ENCODE measurements at regions of chr1 and their contacts with region 1.

Region 1: DNA sequence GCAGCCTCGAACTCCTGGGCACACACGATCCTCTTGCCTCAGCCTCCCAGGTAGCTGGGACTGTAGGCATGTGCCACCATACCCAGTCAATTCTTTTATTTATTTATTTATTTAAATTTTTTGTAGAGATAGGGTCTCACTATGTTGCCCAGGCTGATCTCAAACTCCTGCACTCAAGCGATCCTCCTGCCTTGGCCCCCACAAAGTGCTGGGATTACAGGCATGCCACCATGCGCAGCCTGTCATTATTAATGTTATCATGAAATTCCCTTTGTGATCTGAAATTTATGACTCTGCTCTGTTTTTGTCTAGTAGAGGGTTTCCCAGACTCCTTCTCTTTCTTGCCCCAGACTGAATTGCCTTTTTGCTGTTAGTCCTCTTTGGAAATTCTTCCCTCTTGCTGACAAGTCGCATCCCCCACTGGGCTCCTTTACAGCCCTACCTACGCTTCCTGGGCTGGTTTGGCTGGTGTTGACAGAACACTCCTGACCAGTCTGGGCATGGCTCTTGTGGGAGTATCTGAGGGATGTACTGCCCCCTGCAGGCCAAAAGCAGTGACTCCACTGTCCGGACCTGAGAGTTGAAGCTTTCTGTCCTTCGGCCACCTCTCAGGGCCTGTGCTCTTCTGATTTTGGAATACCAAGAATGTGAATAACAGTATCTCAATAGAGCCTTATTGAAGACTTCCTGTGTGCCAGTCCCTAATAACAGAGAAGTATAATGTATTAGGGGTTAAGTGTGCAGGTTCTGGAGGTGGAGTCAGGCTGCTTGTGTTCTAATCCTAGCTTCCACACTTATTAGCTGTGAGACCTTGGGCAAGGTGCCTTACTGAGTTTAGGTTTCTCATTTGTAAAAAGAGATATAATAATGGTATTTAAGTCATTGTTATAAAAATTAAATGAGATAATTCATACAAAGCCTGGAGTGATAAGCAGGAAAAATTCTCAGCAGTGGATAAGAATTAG is 28.2 kb downstream of the TCEANC2 start:
- DNase-seq: peak; percentile 57
- H3K4me3 ChIP-seq: no peak overlapping the region; a peak in 1 of 4 replicates
- H3K27ac ChIP-seq: no peak overlapping the region
- H3K4me1 ChIP-seq: no peaks in the 10 kb centered on the region
- H3K27me3 ChIP-seq: no peaks in the 10 kb centered on the region
- CTCF ChIP-seq: peak; percentile 80
- EP300 ChIP-seq: no peak
- RAD21 ChIP-seq: peak; percentile 56

Region 2: DNA sequence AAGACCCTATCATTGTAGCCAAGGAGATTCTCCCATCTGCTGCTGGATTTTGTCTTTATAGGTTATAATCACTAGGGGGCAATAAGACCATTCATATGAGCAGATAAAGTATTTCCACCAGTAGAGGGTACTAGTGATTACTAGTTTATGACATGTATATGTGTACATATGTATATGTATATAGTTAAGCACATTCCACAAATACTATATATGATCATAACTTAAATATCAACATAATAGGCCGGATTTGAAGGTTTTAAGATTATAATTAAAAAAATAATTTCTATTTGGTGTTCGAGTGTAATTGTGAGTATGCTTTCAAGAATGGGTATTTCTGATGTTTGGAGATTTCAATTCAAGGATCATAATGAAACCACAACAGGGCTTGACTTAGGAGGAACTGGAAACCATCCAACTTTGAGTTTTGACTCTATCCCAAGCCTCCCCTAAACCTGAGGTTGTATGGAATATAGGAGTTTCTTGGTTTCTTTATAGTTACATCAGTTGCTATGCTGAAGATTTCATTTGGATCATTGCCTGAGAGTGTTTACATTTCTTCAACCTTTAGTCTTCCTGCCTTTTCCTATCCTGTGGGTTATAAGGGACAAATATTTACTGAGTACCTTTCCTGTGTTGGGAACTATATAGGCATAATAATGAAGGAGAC is 11.3 kb before region 1 on chr1:
- CTCF ChIA-PET with region 1: interaction called, 17 read pairs
- POLR2A ChIA-PET with region 1: no interaction called
- DNase-seq: peak; percentile 68
- H3K4me3 ChIP-seq: peak overlapping the region in 1 of 2 experiments; percentile 30; a peak in 1 of 4 replicates
- H3K27ac ChIP-seq: no peak overlapping the region
- H3K4me1 ChIP-seq: no peaks in the 10 kb centered on the region
- H3K27me3 ChIP-seq: no peaks in the 10 kb centered on the region
- CTCF ChIP-seq: peak; percentile 91
- EP300 ChIP-seq: no peak
- RAD21 ChIP-seq: peak; percentile 89

Region 3: DNA sequence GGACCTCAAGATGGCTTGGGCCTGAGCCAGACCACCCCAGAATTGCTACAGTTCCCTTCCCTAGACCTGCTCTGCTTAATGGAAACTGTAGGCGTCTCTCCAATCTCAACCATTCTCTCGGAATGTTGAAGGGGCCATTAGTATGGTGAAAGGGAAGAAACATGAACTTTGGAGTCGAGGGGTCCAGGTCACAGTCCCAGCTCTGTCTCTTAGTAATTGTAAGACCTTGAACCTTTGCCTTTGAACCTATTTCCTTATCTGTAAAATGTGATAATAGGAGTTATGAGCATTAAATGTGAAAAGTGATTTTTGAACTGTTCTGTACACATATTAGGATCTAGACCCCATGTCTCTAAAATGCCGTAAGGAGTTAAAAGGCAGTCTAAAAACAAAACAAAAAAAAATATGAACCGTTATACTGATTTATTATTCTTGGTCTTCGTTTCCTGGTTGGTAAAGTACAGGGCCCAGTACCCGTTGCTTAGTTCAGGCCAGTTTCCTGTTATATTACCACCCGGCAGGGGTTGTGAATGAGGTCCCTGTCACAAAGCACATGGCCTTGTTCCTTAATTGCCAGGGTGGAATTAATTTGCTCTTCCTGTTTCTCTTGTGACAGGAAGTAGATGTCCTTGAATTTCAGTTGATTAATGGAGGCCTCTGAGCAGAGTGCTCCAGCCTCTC is 14.1 kb after region 1 on chr1:
- CTCF ChIA-PET with region 1: interaction called, 17 read pairs
- POLR2A ChIA-PET with region 1: no interaction called
- DNase-seq: peak; percentile 41
- H3K4me3 ChIP-seq: no peak overlapping the region
- H3K27ac ChIP-seq: peak overlapping the region in 1 of 2 experiments; percentile 23; a peak in 2 of 4 replicates
- H3K4me1 ChIP-seq: peaks cover 0 to 16% of the 10 kb centered on the region in 2 experiments; a peak in 2 of 4 replicates
- H3K27me3 ChIP-seq: no peaks in the 10 kb centered on the region
- CTCF ChIP-seq: no peak
- EP300 ChIP-seq: no peak
- RAD21 ChIP-seq: no peak